T-cell (primary cell): ENCODE measurements at regions of chr6 and their contacts with region 1.

Region 1: GRCh38 chr6:43376551-43376981 is 7.1 kb upstream of the ZNF318 start:
- DNase-seq: no peak
- ATAC-seq: no peak
- H3K4me3 ChIP-seq: no peak overlapping the region
- H3K4me3 Mint-ChIP-seq: no peak overlapping the region
- H3K27ac ChIP-seq: no peak overlapping the region
- H3K27ac Mint-ChIP-seq: no peak overlapping the region
- H3K4me1 ChIP-seq: peaks cover 0 to 8% of the 10 kb centered on the region in 2 experiments
- H3K4me1 Mint-ChIP-seq: peaks cover 19 to 41% (median 29%) of the 10 kb centered on the region in 3 donors
- H3K27me3 ChIP-seq: no peaks in the 10 kb centered on the region
- H3K27me3 Mint-ChIP-seq: no peaks in the 10 kb centered on the region

Region 2: DNA sequence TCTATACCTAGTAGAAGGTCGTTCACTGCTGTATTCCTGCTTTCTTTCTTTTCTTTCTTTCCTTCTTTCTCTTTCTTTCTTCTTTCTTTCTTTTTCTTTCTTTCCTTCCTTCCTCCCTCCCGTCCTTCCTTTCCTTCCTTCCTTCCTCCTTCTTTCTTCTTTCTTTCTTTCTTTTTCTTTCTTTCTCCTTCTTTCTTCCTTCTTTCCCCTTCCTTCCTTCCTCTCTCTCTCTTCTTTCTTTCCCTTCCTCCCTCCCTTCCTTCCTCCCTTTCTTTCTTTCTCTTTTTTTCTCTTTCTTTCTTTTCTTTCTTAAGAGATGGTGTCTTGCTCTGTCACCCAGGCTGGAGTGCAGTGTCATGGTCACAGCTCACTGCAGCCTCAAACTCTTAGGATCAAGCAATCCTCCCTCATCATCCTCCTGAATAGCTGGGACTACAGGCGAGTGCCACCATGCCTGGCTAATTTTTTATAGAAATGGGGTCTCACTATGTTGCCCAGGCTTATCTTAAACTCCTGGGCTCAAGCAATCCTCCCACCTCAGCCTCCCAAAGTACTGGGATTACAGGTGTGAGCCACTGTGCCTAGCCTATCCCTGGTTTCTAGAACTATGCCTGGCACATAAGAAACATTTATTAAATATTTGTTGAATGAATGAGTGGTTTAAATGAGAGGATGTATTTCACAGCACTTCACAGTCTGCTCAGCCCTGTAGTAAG is 144.7 kb before region 1 on chr6:
- CTCF ChIA-PET with region 1: interaction called in 1 of 2 experiments, 10 read pairs
- POLR2A ChIA-PET with region 1: interaction called in 1 of 2 experiments, 3 read pairs
- DNase-seq: no peak
- ATAC-seq: no peak
- H3K4me3 ChIP-seq: no peak overlapping the region
- H3K4me3 Mint-ChIP-seq: no peak overlapping the region
- H3K27ac ChIP-seq: no peak overlapping the region
- H3K27ac Mint-ChIP-seq: no peak overlapping the region
- H3K4me1 ChIP-seq: peaks cover 0 to 20% of the 10 kb centered on the region in 2 experiments
- H3K4me1 Mint-ChIP-seq: peaks cover 17 to 26% (median 23%) of the 10 kb centered on the region in 3 donors
- H3K27me3 ChIP-seq: peaks cover 2 to 14% of the 10 kb centered on the region in 2 experiments
- H3K27me3 Mint-ChIP-seq: peaks cover 5 to 7% of the 10 kb centered on the region in 2 donors

Region 3: GRCh38 chr6:43339168-43339567 is 37.4 kb before region 1 on chr6:
- CTCF ChIA-PET with region 1: no interaction called
- POLR2A ChIA-PET with region 1: no interaction called
- DNase-seq: no peak
- ATAC-seq: no peak
- H3K4me3 ChIP-seq: no peak overlapping the region
- H3K4me3 Mint-ChIP-seq: no peak overlapping the region
- H3K27ac ChIP-seq: no peak overlapping the region
- H3K27ac Mint-ChIP-seq: no peak overlapping the region
- H3K4me1 ChIP-seq: no peaks in the 10 kb centered on the region
- H3K4me1 Mint-ChIP-seq: peaks cover 4 to 12% (median 12%) of the 10 kb centered on the region in 3 donors
- H3K27me3 ChIP-seq: no peaks in the 10 kb centered on the region
- H3K27me3 Mint-ChIP-seq: no peaks in the 10 kb centered on the region